ENCODE measurements at regions of chr15 and their contacts with region 1.

Region 1: DNA sequence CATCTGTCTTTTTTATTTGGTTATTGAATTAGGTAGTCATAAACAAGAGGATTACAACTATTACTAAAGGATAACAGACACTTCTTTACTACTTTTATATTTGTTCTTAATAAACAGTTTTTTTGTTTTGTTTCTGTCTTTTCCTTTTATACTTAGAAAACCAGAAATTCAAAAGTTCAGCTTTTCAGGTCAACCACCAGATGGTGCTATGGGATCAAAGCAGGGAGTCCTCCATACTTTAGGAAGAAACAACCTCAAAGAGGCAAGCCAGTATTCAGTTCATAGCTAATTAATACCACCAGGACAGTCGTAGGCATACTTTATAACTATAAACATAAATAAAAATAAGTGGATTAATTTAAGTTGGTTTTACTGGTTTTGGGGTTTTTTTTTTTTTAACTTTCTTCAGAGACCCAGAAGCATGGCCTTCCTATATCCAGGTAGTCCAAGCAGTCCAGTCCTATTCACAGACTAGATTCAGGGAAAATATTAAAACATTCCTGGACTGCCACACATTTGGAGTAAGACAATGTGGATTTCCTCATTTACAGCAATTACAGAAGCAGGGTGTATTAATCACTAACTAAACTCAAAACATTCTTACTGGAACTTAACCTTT is 16.0 kb upstream of the EID1 start:
- DNase-seq: peak; percentile 65
- H3K4me3 Mint-ChIP-seq: no peak overlapping the region
- H3K27ac Mint-ChIP-seq: no peak overlapping the region
- H3K4me1 Mint-ChIP-seq: peaks cover 30% of the 10 kb centered on the region
- H3K27me3 Mint-ChIP-seq: no peaks in the 10 kb centered on the region
- CTCF ChIP-seq: peak; percentile 32

Region 2: GRCh38 chr15:48604567-48604966 is 257.4 kb before region 1 on chr15:
- CTCF ChIA-PET with region 1: no interaction called
- intact Hi-C with region 1: no loop called
- DNase-seq: no peak
- H3K4me3 Mint-ChIP-seq: no peak overlapping the region
- H3K27ac Mint-ChIP-seq: no peak overlapping the region
- H3K4me1 Mint-ChIP-seq: no peaks in the 10 kb centered on the region
- H3K27me3 Mint-ChIP-seq: no peaks in the 10 kb centered on the region
- CTCF ChIP-seq: no peak

Region 3: DNA sequence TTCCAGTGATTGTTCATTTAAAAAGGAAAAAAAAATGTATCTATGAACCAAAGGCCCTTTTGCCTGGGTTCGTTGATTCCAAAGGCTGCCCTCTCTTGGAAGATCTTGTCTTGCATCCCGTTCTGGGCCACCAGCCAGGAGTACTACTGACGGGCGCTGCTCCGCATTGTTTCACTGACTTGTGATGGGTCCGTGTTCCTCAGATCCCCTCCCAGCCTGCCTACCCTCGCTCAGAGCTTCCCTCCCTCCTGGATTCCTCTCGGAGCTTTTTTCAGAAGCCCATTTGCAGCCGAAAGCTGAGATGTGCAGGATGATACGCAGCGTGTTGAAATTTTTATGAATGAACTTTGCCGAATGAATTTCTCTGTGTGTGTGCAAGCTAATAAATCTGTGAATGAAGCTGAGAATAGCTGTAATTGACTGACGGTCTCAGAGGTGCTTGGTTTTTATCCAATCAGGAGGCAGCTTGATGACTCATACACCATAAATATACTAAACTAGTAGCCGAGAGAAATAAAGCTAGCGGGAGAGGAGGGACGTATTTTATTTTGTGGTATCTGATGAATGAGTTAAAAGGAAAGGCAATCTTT is 101.7 kb after region 1 on chr15 and contains the start of gene SHC4:
- CTCF ChIA-PET with region 1: interaction called, 29 read pairs
- intact Hi-C with region 1: loop called (anchors 1 kb)
- DNase-seq: peak; percentile 37
- H3K4me3 Mint-ChIP-seq: peak within 1 kb of the TSS; percentile 70
- H3K27ac Mint-ChIP-seq: peak within 1 kb of the TSS; percentile 67
- H3K4me1 Mint-ChIP-seq: peaks cover 33% of the 10 kb centered on the region
- H3K27me3 Mint-ChIP-seq: no peaks in the 10 kb centered on the region
- CTCF ChIP-seq: no peak
- total RNA-seq, gene SHC4: 1.2 and 1.9 TPM in 2 replicates

Region 4: GRCh38 chr15:49031764-49032270 is 169.9 kb after region 1 on chr15:
- CTCF ChIA-PET with region 1: no interaction called
- intact Hi-C with region 1: no loop called
- DNase-seq: no peak
- H3K4me3 Mint-ChIP-seq: no peak overlapping the region
- H3K27ac Mint-ChIP-seq: no peak overlapping the region
- H3K4me1 Mint-ChIP-seq: no peaks in the 10 kb centered on the region
- H3K27me3 Mint-ChIP-seq: no peaks in the 10 kb centered on the region
- CTCF ChIP-seq: no peak

Region 5: DNA sequence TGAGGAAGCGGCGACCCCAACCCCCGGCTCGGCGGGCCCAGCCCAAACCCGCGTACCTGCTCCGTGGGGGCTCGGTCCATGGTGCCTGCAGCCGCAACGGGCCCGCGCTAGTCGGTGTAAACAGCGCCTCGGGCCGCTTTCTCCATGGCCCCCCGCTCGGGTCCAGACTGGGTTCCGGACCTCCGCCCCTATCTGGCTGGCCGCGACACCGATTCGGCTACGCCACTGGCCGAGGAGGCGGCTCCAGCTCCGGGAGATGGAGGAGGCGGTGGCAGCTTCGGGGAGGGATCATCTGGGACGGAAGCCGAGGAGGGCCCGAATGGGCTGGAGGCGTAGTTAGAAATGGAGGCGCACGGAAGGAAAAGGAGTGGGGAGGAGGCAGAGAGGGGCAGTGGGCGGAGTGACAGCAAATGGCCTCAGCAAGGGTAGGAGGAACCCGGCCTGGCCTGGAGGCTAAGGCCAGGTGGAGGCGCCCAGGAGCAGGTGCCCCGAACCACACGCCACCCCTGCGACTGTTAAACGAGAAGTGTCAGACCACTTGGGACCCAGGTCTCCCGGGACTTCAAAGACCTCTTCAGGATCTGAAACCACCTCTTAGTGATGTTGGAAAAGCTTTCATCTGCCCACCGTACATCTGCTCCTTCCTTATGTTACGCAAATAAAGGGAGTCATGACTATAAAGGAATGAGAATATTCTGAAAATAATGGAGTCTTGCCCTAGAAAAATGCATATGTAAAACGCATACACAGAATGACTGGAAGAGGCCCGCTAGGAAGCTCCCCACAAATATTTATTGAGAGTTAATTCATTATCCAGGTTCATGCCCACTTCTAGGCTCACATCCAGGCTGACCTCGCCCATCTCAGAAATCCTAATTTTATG is 184.5 kb after region 1 on chr15 and contains the start of gene SECISBP2L:
- CTCF ChIA-PET with region 1: no interaction called
- intact Hi-C with region 1: loop called (anchors 5 kb)
- DNase-seq: peak; percentile 94
- H3K4me3 Mint-ChIP-seq: peak within 1 kb of the TSS; percentile 94
- H3K27ac Mint-ChIP-seq: peak within 1 kb of the TSS; percentile 89
- H3K4me1 Mint-ChIP-seq: no peaks in the 10 kb centered on the region
- H3K27me3 Mint-ChIP-seq: no peaks in the 10 kb centered on the region
- CTCF ChIP-seq: no peak
- total RNA-seq, gene SECISBP2L: 32.6 and 37.0 TPM in 2 replicates

Region 6: GRCh38 chr15:49059491-49059890 is 197.6 kb after region 1 on chr15:
- CTCF ChIA-PET with region 1: no interaction called
- intact Hi-C with region 1: no loop called
- DNase-seq: no peak
- H3K4me3 Mint-ChIP-seq: no peak overlapping the region
- H3K27ac Mint-ChIP-seq: no peak overlapping the region
- H3K4me1 Mint-ChIP-seq: no peaks in the 10 kb centered on the region
- H3K27me3 Mint-ChIP-seq: no peaks in the 10 kb centered on the region
- CTCF ChIP-seq: no peak

Region 7: GRCh38 chr15:49225613-49226281 is 363.8 kb after region 1 on chr15:
- CTCF ChIA-PET with region 1: interaction called, 5 read pairs
- intact Hi-C with region 1: loop called (anchors 5 kb)
- DNase-seq: peak; percentile 37
- H3K4me3 Mint-ChIP-seq: no peak overlapping the region
- H3K27ac Mint-ChIP-seq: no peak overlapping the region
- H3K4me1 Mint-ChIP-seq: no peaks in the 10 kb centered on the region
- H3K27me3 Mint-ChIP-seq: no peaks in the 10 kb centered on the region
- CTCF ChIP-seq: no peak

Region 8: GRCh38 chr15:50051803-50052419 is 1190.0 kb after region 1 on chr15:
- CTCF ChIA-PET with region 1: interaction called, 3 read pairs
- intact Hi-C with region 1: loop called (anchors 5 kb)
- DNase-seq: peak; percentile 59
- H3K4me3 Mint-ChIP-seq: no peak overlapping the region
- H3K27ac Mint-ChIP-seq: no peak overlapping the region
- H3K4me1 Mint-ChIP-seq: no peaks in the 10 kb centered on the region
- H3K27me3 Mint-ChIP-seq: no peaks in the 10 kb centered on the region
- CTCF ChIP-seq: peak; percentile 55